Dendritic cell treated with granulocyte-macrophage colony-stimulating factor and Interleukin-4, amounts not matched to agents 40 ng/mL and 50 ng/mL, for 4 days (primary cell): ENCODE measurements at regions of chr12 and their contacts with region 1.

Region 1: DNA sequence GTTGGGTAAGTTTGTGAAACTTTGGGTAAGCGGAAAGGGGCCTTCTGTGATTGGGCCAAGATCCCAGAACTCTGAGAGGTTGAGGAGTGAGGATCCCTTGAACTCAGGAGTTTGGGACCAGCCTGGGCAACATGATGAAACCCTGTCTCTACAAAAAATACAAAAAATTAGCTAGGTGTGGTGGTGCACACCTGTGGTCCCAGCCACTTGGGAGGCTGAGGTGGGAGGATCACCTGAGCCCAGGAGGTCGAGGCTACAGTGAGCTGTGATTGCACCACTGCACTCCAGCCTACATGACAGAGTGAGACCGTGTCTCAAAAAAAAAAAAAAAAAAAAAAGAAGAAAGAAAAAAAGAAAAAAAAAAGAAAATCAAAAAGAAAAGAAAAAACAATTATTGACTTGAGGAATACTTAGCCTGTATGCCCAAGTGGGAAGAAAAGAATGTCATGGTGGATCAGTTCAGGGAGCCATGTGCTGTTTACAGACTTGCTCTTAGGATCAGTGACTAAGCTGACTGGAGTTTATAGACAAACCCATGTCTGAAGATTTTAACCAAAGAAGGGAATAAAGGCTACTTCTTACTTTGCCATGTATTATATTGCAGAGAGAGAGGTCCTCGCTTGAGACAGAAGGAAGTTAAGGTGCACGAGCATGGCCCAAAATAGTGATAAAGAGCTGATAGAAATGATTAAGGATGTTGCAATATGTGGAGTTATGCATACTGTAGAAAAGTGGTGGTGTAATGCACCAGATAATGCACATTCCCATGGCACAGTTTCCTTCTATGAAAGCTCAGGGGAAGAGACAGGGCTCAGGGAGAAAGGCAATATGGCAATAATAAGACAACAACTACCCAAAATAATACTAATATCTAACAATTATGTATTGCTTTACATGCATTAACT is 881 bp downstream of the HSD17B6 start:
- H3K4me3 Mint-ChIP-seq: no peak overlapping the region
- H3K27ac Mint-ChIP-seq: no peak overlapping the region
- H3K4me1 Mint-ChIP-seq: peaks cover 38% of the 10 kb centered on the region
- H3K27me3 Mint-ChIP-seq: peaks cover 3% of the 10 kb centered on the region

Region 2: DNA sequence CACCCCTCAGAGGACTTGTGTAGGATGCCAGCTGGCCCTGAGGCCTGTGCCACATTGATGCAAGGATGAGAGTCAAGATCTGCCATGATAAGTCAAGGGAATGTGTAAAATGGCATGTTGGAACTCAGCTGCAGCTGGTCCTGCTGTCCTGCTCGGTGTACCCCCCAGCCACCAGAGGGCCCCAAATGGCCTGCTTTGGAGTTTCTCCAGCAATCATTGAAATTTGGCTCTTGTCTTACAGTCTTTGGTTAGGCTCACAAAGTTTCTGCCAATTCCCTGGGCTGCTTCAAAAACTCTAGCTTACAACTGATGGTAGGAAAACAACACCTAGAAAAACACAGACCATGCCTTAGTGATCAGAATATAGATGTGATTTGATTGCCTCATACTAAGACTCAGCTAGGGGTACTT is 75.9 kb after region 1 on chr12:
- intact Hi-C with region 1: loop called (anchors 5 kb)
- H3K4me3 Mint-ChIP-seq: no peak overlapping the region
- H3K27ac Mint-ChIP-seq: no peak overlapping the region
- H3K4me1 Mint-ChIP-seq: peaks cover 12% of the 10 kb centered on the region
- H3K27me3 Mint-ChIP-seq: peaks cover 19% of the 10 kb centered on the region

Region 3: DNA sequence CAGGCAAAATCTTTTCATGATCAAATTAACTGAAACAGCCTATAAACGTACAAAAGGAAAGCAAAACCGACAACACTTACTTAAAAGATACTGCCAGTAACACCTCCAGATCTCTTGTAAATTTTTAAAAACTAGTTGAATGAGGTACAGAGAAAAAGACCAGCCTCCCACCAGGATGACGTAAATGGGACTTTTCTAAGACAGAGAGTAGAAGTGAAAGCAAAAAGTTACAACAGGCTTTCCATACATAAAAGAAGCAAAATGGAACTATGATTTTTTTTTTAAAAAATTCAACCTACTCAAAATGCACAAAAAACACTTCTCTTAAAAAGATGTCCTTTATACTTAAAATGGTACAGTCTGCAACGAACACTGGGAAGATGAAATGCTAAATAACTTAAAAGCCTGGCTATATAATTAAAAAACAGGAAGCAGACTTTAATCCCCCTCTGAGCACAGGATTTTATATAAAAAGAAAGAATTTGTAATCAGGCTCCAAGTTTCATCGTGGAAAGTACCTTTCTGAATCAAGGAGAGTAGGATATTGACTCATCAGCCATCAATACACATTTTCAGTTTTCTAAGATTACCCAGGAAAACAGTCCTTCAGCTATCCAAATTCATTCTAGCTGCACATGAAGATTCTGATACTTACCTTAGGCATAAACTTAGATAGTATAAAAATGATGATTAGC is 300.1 kb after region 1 on chr12:
- intact Hi-C with region 1: loop called (anchors 5 kb)
- H3K4me3 Mint-ChIP-seq: peak overlapping the region; percentile 50
- H3K27ac Mint-ChIP-seq: peak overlapping the region; percentile 68
- H3K4me1 Mint-ChIP-seq: peaks cover 30% of the 10 kb centered on the region
- H3K27me3 Mint-ChIP-seq: no peaks in the 10 kb centered on the region